ENCODE measurements at regions of chr22 and their contacts with region 1.

Region 1: DNA sequence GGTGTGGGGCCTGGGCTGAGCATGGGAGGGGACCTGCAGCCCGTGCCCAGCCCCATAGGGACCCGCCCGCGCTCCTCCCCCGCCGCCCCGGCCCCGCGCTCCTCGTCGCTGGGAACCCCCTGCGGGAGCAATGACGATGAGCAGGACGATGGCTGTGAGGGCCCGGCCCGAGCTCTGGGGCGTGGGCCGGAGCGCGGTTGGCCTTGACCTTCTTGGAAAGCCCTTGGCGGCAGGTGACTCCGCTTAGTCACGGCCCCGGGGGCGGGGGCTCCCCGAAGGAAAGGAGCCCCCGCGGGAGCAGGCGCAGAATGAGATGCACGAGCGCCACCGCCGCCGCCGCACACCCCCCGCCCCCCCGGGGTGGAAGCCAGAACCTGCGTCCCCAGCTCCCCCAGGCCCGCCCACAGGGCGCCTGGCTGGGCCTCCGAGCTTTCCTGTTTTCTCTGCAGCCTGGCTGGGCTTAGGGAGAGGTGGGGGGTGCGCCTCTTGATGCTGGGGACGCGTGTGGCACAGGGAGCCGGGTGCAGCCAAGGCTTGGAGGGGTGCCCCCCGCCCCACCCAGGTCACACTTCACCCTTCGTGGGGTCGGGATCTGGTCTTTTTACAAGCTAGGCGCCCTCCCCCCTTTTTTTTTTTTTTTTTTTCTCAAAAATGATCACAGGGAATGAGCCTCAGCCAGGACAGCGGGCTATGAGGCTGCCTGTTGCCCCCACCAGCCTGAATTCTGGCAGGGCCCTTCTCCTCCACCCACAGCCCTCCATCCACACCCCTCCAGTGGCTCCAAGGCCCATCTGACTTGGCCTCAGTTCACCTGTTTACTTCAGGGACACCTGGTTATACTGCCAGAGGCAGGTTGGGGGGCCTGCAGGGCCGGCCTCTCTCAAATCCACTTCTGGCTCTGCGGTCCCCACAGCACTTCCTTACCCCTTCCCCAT is 17.9 kb downstream of the CRELD2 start:
- DNase-seq: peak; percentile 80
- H3K4me3 ChIP-seq: peak overlapping the region; percentile 40 to 44
- H3K27ac ChIP-seq: peak overlapping the region; percentile 94 to 95
- H3K4me1 ChIP-seq: peaks cover 18% of the 10 kb centered on the region
- H3K27me3 ChIP-seq: no peaks in the 10 kb centered on the region
- CTCF ChIP-seq: no peak
- POLR2A ChIP-seq: peak; percentile 58

Region 2: DNA sequence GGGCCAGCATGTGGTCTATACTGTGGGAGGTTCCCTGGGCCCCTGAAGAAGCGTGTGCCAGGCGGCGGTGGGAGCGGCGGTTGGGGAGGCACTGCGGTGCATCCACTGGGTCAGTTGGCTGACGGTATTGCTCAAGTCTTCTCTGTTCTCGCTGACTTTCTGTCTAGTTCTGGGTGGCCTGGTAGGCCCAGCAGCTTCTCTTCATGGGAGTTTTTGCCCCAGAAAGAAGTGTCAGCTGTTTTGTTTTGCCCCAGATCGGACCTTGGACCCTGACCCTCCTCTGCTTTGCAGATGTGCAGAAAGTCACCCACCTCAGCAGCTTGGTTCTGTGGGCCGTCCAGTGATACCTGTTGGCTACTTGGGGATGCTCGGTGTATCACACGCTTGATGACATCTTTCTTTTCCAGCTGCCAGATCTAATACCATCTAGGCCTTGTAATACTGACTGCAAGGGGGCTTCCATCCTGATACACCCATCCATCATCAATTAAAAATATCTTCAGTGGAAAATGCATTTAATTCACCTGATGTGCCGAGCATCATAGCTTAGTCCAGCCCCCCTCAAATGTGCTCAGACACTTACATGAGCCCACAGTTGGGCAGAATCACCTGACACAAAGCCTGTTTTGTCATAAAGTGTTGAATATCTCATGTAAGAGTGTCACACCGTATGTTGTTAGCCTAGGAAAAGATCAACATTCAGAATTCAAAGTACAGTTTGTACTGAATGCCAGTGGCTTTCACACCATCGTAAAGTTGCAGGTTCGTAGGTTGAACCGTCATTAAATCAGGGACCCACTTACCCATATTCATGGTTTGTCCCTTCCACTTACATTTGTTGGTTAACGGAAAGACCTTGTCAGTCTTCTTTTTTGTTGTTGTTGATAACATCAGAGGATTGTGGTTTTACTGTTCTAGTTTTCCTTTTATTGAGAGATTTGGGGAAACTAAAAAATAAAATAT is 68.7 kb before region 1 on chr22:
- intact Hi-C with region 1: no loop called
- DNase-seq: no peak
- H3K4me3 ChIP-seq: no peak overlapping the region
- H3K27ac ChIP-seq: no peak overlapping the region
- H3K4me1 ChIP-seq: no peaks in the 10 kb centered on the region
- H3K27me3 ChIP-seq: no peaks in the 10 kb centered on the region
- CTCF ChIP-seq: no peak
- POLR2A ChIP-seq: no peak

Region 3: DNA sequence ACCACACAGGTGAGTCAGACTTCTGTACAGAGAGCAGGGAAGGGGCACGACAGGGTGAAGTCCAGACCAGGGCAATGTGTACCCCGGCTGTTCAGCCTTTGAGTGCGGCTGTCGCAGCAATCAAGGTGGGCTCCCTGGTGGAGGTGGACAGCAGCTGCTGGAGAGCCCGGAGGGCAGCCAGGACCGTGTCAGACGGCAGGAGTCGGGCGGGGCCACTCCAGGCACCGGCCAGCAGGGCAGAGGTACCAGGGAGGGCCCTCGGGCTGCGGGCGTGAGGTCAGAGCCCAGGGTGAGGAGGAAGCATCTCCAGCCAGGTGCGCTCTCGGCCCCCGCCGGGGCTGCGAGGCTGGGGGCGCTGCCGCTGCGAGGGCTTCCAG is 23.5 kb after region 1 on chr22:
- intact Hi-C with region 1: loop called (anchors 2 kb)
- DNase-seq: peak; percentile 30
- H3K4me3 ChIP-seq: peak overlapping the region; percentile 69 to 83
- H3K27ac ChIP-seq: peak overlapping the region; percentile 92 to 99
- H3K4me1 ChIP-seq: peaks cover 26% of the 10 kb centered on the region
- H3K27me3 ChIP-seq: no peaks in the 10 kb centered on the region
- CTCF ChIP-seq: peak in 2 of 4 experiments; percentile 25 to 29
- POLR2A ChIP-seq: no peak

Region 4: DNA sequence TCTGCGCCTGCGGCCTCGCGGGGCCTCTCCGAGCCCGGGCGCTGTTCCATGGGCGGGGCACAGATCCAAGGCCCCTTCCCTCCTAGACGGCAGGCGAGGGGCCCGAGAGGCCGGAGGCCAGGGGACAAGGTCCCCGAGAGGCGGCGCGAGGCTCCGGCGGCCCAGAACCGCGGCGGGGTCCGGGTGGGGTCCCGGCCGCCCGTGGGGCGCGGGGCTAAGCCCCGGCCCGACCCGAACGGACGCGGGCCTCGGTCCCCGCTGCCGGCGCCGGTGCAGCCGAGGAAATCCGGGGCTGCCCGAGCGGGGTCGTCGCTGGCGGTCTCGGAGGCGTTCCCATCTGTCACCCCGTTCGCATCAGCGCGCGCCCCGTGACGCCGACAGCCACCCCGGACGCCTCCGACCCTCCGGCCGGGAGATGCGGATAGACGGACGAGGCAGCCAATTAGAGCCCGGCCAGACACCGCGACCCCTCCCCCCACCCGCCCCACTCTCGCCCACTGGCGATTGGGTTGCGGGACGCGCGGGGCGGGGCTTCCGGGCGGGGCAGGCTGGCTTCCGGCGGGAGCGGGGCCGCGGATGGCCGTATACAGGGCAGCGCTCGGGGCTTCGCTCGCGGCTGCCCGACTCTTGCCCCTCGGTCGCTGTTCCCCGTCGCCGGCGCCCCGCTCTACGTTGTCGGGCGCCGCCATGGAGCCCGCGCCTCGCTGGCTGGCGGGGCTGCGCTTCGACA is 264.3 kb after region 1 on chr22 and contains the start of gene SELENOO:
- intact Hi-C with region 1: loop called (anchors 10 kb)
- DNase-seq: peak; percentile 86
- H3K4me3 ChIP-seq: peak within 1 kb of the TSS; percentile 68 to 72
- H3K27ac ChIP-seq: peak within 1 kb of the TSS; percentile 73 to 80
- H3K4me1 ChIP-seq: peaks cover 5% of the 10 kb centered on the region
- H3K27me3 ChIP-seq: no peaks in the 10 kb centered on the region
- CTCF ChIP-seq: no peak
- POLR2A ChIP-seq: peak; percentile 83
- total RNA-seq, gene SELENOO: 51.8 to 58.5 TPM

Measured in prostate gland (tissue), 2 donors.